ENCODE measurements at regions of chr2 and their contacts with region 1.

Region 1: GRCh38 chr2:69298261-69298660 is 88.8 kb downstream of the GFPT1 start:
- ATAC-seq: peak in 2 of 8 experiments; percentile 28 to 35
- H3K4me3 ChIP-seq: no peak overlapping the region
- H3K27ac ChIP-seq: no peak overlapping the region
- H3K4me1 ChIP-seq: no peaks in the 10 kb centered on the region

Region 2: DNA sequence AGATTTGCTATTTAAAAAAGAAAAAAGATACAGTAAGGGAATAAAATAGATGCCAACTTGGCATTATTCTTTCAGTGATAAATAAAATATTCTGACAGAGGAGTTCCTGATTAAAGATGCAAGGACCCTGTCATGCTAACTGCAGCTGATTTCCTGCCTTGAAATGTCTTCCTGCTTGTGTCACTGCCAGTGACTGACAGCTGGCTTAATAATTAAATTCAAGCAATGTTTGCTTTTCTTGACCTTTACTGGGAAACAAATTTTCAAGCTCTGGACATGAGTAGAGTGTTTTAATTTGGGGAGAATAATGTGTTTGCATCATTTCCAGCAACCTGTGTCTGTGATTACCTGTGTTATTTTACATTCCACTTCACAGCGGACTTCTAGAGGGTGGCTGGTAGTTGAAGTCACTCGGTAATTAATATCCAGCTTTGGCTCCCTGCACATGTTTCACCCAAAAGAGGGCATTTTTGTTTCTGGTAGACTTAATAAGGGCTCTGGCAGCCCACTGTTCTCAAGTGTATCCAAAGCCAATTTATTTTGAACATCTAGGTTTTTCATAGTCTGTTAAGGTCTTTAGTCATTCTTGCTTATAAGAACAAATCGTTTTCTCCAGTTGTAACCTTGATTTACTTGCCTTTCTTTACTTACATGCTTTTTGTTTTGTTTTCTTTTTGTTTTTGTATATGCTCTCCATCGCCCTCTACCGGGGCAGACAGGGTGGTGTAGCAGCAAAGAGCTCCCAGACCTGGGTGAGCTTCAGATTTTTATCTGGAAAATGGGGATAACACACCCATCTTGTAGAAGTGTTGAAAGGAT is 703.4 kb before region 1 on chr2:
- in situ Hi-C with region 1: no loop called
- ATAC-seq: peak in 3 of 8 experiments; percentile 56 to 61 (median 57)
- H3K4me3 ChIP-seq: no peak overlapping the region
- H3K27ac ChIP-seq: no peak overlapping the region
- H3K4me1 ChIP-seq: no peaks in the 10 kb centered on the region

Region 3: DNA sequence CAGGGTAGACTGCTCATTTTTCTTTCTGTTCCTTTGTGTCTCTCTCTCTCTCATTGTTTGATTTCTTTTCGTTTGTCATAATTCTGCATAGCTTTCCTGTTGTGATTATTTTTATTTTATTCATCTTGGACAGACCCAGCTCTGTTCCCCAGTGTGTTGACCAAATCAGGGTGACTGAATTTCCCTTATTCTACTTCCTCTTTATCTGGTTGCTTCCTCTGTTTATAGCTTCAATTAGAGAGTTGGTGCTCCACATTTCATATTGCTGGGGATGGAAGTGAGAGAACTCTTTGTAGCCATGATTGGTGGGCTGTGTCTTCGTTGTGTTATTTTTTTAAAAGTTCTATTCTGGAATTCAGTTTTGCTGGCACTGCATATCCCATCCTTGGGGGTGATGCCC is 635.8 kb before region 1 on chr2:
- in situ Hi-C with region 1: no loop called
- ATAC-seq: no peak
- H3K4me3 ChIP-seq: no peak overlapping the region
- H3K27ac ChIP-seq: no peak overlapping the region
- H3K4me1 ChIP-seq: no peaks in the 10 kb centered on the region

Region 4: GRCh38 chr2:69012310-69013141 is 285.7 kb before region 1 on chr2:
- in situ Hi-C with region 1: loop called in 7 of 9 experiments (anchors 25 kb)
- ATAC-seq: peak; percentile 38 to 68 (median 55)
- H3K4me3 ChIP-seq: peak overlapping the region; percentile 61 to 86 (median 75)
- H3K27ac ChIP-seq: no peak overlapping the region
- H3K4me1 ChIP-seq: peaks cover 6% of the 10 kb centered on the region in 2 donors

Measured in motor neuron (in vitro differentiated cells).